ENCODE measurements at regions of chr7 and their contacts with region 1.

Region 1: GRCh38 chr7:104074529-104074928 is 85.1 kb upstream of the RELN start:
- DNase-seq: no peak
- ATAC-seq: no peak
- H3K4me3 ChIP-seq: no peak overlapping the region
- H3K27ac ChIP-seq: no peak overlapping the region
- H3K4me1 ChIP-seq: no peaks in the 10 kb centered on the region
- H3K27me3 ChIP-seq: peaks cover 2% of the 10 kb centered on the region; the same call in 1 of the 2 replicates
- CTCF ChIP-seq: no peak

Region 2: GRCh38 chr7:104296900-104297299 is 222.4 kb after region 1 on chr7:
- CTCF ChIA-PET with region 1: no interaction called
- POLR2A ChIA-PET with region 1: interaction called, 10 read pairs
- in situ Hi-C with region 1: no loop called
- intact Hi-C with region 1: no loop called
- DNase-seq: no peak
- ATAC-seq: no peak
- H3K4me3 ChIP-seq: no peak overlapping the region
- H3K27ac ChIP-seq: no peak overlapping the region
- H3K4me1 ChIP-seq: no peaks in the 10 kb centered on the region; the same call in 1 of the 2 replicates
- H3K27me3 ChIP-seq: no peaks in the 10 kb centered on the region
- CTCF ChIP-seq: no peak

Region 3: GRCh38 chr7:104900525-104901239 is 826.2 kb after region 1 on chr7:
- CTCF ChIA-PET with region 1: no interaction called
- POLR2A ChIA-PET with region 1: no interaction called
- in situ Hi-C with region 1: no loop called
- intact Hi-C with region 1: no loop called
- DNase-seq: no peak
- ATAC-seq: no peak
- H3K4me3 ChIP-seq: no peak overlapping the region
- H3K27ac ChIP-seq: no peak overlapping the region
- H3K4me1 ChIP-seq: no peaks in the 10 kb centered on the region
- H3K27me3 ChIP-seq: 0 out of 2 replicates have a peak, but pooled peaks cover under 1% of the 10 kb centered on the region
- CTCF ChIP-seq: no peak